Activated naive CD4-positive, alpha-beta T cell treated with anti-CD3 and anti-CD28 coated beads for 36 hours (primary cell): ENCODE measurements at regions of chr1 and their contacts with region 1.

Region 1: DNA sequence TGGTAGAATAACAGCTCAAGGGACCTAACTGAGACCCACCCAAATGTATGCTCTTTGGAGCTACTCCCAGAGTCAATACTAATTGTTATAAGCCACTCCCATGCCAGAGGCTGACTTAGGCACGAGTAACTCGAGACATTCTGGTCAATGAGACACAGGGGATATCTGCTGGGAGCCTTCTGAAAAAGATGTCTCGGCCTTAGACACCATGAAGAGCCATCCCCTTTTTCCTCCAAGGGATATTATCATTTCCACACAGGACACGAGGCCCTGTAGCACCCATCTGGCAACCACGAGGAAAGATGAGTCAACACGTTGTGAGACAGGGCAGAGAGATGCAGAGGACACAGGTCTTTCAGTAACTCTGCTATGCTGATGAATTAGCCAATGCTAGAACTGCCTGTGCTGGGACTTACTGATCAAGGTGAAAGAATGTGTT is 30.7 kb downstream of the ITPKB start:
- DNase-seq: peak; percentile 66
- H3K4me3 Mint-ChIP-seq: peak overlapping the region; percentile 71
- H3K27ac Mint-ChIP-seq: peak overlapping the region; percentile 99
- H3K4me1 Mint-ChIP-seq: peaks cover 90% of the 10 kb centered on the region
- H3K27me3 Mint-ChIP-seq: no peaks in the 10 kb centered on the region

Region 2: GRCh38 chr1:226723657-226724532 is 15.5 kb after region 1 on chr1:
- CTCF ChIA-PET with region 1: interaction called, 12 read pairs
- intact Hi-C with region 1: loop called (anchors 1 kb)
- DNase-seq: peak; percentile 51
- H3K4me3 Mint-ChIP-seq: peak overlapping the region; percentile 86
- H3K27ac Mint-ChIP-seq: peak overlapping the region; percentile 98
- H3K4me1 Mint-ChIP-seq: peaks cover 92% of the 10 kb centered on the region
- H3K27me3 Mint-ChIP-seq: no peaks in the 10 kb centered on the region

Region 3: DNA sequence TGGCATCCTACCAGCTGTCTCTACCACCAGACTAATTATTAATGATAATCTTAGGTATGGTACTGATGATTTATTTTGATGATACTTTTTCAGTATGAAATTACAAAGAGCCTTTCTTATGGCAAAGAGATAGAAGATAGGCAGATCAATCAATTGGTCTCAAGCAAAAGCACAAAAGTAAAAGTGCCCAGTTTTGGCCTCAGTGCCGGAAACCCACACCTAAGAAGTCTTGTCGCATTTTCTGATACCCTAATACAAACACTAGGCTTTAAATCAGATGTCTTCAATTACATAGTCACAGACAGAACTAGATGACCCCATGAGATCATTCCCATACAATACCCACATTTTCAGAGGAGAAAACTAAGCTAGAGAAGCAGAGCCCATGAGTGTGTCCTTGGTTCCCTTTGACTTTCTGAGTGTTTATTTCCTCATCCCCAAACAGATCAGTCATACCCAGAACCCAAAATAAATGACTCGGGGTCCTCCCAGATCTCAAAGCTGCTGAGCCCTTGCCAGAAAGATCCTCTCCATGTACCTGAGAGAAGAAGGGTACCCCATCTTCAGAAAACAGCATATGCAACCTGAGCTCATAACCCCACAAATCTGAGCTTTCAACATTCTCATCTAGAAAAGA is 23.0 kb after region 1 on chr1:
- CTCF ChIA-PET with region 1: interaction called, 12 read pairs
- intact Hi-C with region 1: no loop called
- DNase-seq: peak; percentile 47
- H3K4me3 Mint-ChIP-seq: peak overlapping the region; percentile 77
- H3K27ac Mint-ChIP-seq: peak overlapping the region; percentile 98
- H3K4me1 Mint-ChIP-seq: peaks cover 74% of the 10 kb centered on the region
- H3K27me3 Mint-ChIP-seq: no peaks in the 10 kb centered on the region